ENCODE measurements at regions of chr11 and their contacts with region 1.

Region 1: GRCh38 chr11:102268329-102269193 is 48.7 kb upstream of the BIRC3 start:
- DNase-seq: peak; percentile 95
- H3K4me3 ChIP-seq: peak overlapping the region; percentile 32 to 56 (median 51)
- H3K27ac ChIP-seq: peak overlapping the region; percentile 90
- H3K4me1 ChIP-seq: peaks cover 36% of the 10 kb centered on the region
- H3K27me3 ChIP-seq: no peaks in the 10 kb centered on the region
- CTCF ChIP-seq: peak; percentile 66 to 78

Region 2: GRCh38 chr11:101738452-101738851 is 530.1 kb before region 1 on chr11:
- CTCF ChIA-PET with region 1: no interaction called
- dilution Hi-C with region 1: no loop called
- in situ Hi-C with region 1: no loop called
- intact Hi-C with region 1: no loop called
- DNase-seq: no peak
- H3K4me3 ChIP-seq: no peak overlapping the region
- H3K27ac ChIP-seq: no peak overlapping the region
- H3K4me1 ChIP-seq: peaks cover 14% of the 10 kb centered on the region
- H3K27me3 ChIP-seq: no peaks in the 10 kb centered on the region
- CTCF ChIP-seq: no peak

Region 3: GRCh38 chr11:102177974-102178631 is 90.5 kb before region 1 on chr11:
- CTCF ChIA-PET with region 1: no interaction called
- dilution Hi-C with region 1: loop called (anchors 5 kb)
- in situ Hi-C with region 1: no loop called
- intact Hi-C with region 1: no loop called
- DNase-seq: peak; percentile 96
- H3K4me3 ChIP-seq: no peak overlapping the region
- H3K27ac ChIP-seq: peak overlapping the region; percentile 66
- H3K4me1 ChIP-seq: peaks cover 28% of the 10 kb centered on the region
- H3K27me3 ChIP-seq: no peaks in the 10 kb centered on the region
- CTCF ChIP-seq: no peak

Region 4: DNA sequence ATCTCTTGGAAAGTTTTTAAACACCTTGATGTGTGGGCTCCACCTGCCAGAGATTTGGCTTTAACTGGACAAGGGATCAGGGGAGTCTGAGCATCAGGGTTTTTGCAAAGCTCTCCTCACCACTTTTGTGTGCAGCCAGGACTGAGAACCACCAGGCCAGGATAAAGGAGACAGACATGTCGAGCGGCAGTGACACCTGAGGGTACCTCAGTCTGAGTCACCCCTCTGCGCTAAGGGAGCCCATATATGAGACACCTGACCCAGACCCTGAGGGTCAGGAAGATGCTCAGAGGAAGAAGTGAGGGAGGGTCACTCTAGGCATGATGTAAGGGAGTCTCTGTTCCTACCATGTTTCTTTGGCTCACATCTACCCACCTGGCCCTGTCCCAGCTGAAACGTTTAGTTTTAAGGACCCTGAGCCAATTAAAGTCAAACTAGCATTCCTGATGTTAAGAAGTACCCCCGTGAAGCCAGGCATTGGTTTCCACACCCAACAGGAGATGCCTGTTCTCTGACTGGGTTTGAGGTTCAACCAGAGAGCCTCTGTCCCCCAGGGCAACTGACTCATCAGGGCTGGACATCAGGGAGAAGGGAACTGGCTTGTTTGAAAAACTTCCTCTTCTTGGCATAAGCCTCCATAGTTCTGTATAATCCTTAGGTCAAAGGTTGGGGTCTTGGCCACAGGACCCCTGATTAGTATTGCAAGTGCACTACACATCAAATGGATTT is 23.7 kb before region 1 on chr11:
- CTCF ChIA-PET with region 1: interaction called, 3 read pairs
- dilution Hi-C with region 1: no loop called
- in situ Hi-C with region 1: no loop called
- intact Hi-C with region 1: loop called (anchors 1 kb)
- DNase-seq: peak; percentile 95
- H3K4me3 ChIP-seq: no peak overlapping the region
- H3K27ac ChIP-seq: peak overlapping the region; percentile 74
- H3K4me1 ChIP-seq: peaks cover 20% of the 10 kb centered on the region
- H3K27me3 ChIP-seq: no peaks in the 10 kb centered on the region
- CTCF ChIP-seq: no peak

Region 5: DNA sequence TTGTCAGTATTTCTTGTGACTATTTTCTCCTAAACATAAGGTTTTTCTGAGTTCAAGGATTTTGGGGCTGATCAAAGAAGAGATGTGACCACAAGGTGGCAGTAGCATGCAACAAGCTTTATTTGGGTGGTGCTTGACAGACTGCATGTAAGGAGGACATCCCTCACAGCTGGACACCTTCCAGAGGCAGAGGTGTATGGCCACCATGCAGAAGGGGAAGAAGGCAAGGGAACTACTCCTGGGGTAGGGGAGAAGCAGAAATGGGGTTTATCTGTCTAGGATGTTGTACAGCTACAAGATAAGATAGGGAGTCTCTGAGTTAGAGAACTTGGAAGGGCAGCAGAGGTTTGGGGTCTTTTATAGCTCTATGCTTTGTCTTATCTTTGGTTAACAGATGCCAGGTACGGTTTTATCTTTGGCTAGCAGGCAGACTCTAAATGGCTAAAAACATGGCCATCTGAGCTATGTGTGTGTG is 73.3 kb after region 1 on chr11:
- CTCF ChIA-PET with region 1: no interaction called
- dilution Hi-C with region 1: no loop called
- in situ Hi-C with region 1: no loop called
- intact Hi-C with region 1: no loop called
- DNase-seq: peak; percentile 72
- H3K4me3 ChIP-seq: no peak overlapping the region
- H3K27ac ChIP-seq: no peak overlapping the region
- H3K4me1 ChIP-seq: peaks cover 12% of the 10 kb centered on the region
- H3K27me3 ChIP-seq: no peaks in the 10 kb centered on the region
- CTCF ChIP-seq: peak; percentile 79 to 85

Region 6: GRCh38 chr11:102716527-102716926 is 448.0 kb after region 1 on chr11:
- CTCF ChIA-PET with region 1: no interaction called
- dilution Hi-C with region 1: no loop called
- in situ Hi-C with region 1: no loop called
- intact Hi-C with region 1: no loop called
- DNase-seq: no peak
- H3K4me3 ChIP-seq: no peak overlapping the region
- H3K27ac ChIP-seq: no peak overlapping the region
- H3K4me1 ChIP-seq: peaks cover 1% of the 10 kb centered on the region
- H3K27me3 ChIP-seq: no peaks in the 10 kb centered on the region
- CTCF ChIP-seq: no peak